Activated naive CD4-positive, alpha-beta T cell treated with anti-CD3 and anti-CD28 coated beads for 36 hours (primary cell): ENCODE measurements at regions of chr10 and their contacts with region 1.

Region 1: DNA sequence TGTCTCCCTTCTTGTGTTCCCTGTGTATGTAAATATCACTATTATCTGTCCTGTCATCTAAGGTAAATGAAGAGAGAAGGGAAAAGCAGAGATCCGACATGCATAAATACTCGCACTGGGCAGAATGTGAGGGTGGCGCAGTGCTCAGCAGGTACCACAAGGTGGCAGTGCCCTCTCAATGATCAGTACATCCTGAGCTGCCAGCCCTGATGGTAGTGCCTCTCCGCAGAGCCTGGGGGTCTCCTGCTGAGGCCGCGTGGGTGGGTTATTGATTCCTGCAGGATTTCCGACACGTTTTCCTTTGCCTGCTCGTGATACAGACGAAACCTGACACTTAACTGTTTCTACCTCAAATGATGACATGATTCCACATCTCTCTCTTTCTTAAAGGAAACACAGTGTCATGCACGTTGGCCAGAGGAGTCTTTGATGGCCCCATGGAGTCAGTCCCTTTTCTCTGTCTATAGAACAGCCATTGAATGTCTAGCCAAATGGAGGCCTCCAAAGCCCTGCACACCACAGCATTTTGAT is 19.8 kb downstream of the RGR start:
- DNase-seq: peak; percentile 86
- H3K4me3 Mint-ChIP-seq: no peak overlapping the region
- H3K27ac Mint-ChIP-seq: no peak overlapping the region
- H3K4me1 Mint-ChIP-seq: peaks cover 29% of the 10 kb centered on the region
- H3K27me3 Mint-ChIP-seq: peaks cover 25% of the 10 kb centered on the region

Region 2: GRCh38 chr10:84288151-84288550 is 23.5 kb after region 1 on chr10:
- CTCF ChIA-PET with region 1: interaction called, 7 read pairs
- intact Hi-C with region 1: loop called (anchors 2 kb)
- DNase-seq: no peak
- H3K4me3 Mint-ChIP-seq: no peak overlapping the region
- H3K27ac Mint-ChIP-seq: no peak overlapping the region
- H3K4me1 Mint-ChIP-seq: peaks cover under 1% of the 10 kb centered on the region
- H3K27me3 Mint-ChIP-seq: peaks cover 2% of the 10 kb centered on the region

Region 3: GRCh38 chr10:84328418-84329195 is 63.9 kb after region 1 on chr10 and contains the start of gene CCSER2:
- CTCF ChIA-PET with region 1: interaction called, 15 read pairs
- intact Hi-C with region 1: loop called (anchors 1 kb)
- DNase-seq: peak; percentile 97
- H3K4me3 Mint-ChIP-seq: peak within 1 kb of the TSS; percentile 95
- H3K27ac Mint-ChIP-seq: peak within 1 kb of the TSS; percentile 96
- H3K4me1 Mint-ChIP-seq: peaks cover 26% of the 10 kb centered on the region
- H3K27me3 Mint-ChIP-seq: no peaks in the 10 kb centered on the region
- total RNA-seq, gene CCSER2: 78.0 to 81.8 TPM

Region 4: DNA sequence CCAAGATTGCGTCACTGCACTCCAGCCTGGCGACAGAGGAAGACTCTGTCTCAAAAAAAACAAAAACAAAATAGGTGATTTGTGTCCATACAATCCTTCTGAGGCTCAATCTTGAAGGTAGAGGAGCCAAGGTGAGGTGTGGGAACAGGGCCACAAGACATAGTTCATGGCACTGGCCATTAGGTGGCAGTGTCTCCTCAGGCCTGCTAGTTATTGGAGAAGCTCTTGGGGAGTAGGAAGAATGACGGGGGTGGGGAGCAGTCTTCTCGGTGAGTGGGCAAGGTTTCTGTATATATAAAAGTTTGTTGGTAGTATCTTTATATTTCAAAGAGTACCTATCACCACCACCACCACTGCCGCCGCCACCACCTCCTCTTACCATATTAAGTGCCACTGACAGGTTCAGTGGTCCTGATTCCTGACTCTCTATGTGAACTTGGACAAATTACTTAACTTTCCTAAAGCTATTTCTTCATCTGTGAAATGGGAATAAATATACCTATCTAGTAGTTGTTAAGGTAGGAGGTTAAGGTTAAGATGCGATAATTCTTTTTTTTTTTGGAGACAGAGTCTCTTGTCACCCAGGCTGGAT is 87.7 kb after region 1 on chr10:
- CTCF ChIA-PET with region 1: interaction called, 28 read pairs
- intact Hi-C with region 1: loop called (anchors 1 kb)
- DNase-seq: peak; percentile 85
- H3K4me3 Mint-ChIP-seq: no peak overlapping the region
- H3K27ac Mint-ChIP-seq: no peak overlapping the region
- H3K4me1 Mint-ChIP-seq: peaks cover 74% of the 10 kb centered on the region
- H3K27me3 Mint-ChIP-seq: no peaks in the 10 kb centered on the region

Region 5: DNA sequence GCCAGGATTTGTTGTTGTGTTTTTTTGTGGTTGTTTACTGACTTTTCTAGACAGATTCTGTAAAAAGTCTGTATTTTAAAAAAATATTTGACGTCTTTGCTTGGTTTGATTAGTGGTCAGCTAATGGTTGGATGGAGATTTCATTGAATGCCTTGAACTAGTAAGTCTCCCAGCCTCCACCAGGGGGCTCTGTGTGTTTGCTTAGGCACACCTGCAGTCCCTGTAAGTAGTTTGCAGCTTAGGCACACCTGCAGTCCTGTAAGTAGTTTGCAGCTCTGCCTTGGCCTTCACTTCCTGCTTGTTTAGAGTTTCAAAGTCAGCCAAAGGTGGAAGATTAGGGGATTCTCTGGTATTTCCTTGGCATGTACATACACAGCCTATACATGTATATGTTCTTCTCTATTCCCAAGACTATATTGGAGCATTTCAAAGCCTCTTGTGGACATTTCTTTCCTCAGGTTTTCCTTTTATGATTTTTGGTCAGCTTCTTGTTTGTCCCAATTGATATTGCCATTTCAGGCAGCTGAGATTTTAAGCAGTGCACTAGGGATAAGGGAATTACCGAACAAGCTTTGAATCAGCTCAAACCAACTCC is 165.3 kb after region 1 on chr10:
- CTCF ChIA-PET with region 1: interaction called, 8 read pairs
- intact Hi-C with region 1: loop called (anchors 1 kb)
- DNase-seq: peak; percentile 86
- H3K4me3 Mint-ChIP-seq: no peak overlapping the region
- H3K27ac Mint-ChIP-seq: no peak overlapping the region
- H3K4me1 Mint-ChIP-seq: peaks cover 23% of the 10 kb centered on the region
- H3K27me3 Mint-ChIP-seq: no peaks in the 10 kb centered on the region